GM10248 (cell line): ENCODE measurements at regions of chr11 and their contacts with region 1.

Region 1: DNA sequence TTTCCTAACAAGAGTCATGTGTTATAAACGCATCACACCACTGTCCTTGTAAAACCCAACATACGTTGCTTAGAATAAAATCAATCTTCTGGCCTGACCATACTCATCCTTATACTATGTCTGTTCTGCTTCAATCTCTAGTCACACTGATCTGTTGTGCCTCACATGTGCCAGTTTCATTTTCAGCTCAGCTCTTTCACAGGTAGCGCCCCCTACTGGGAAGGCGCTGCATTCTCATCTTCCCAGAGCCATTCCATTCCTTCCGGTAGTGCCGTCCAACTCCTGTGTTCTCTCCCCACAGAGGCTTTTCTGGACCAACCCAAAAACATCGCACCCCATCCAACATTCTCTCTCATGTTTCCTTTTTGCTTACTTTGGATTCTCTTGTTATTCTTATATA is 22.2 kb downstream of the CASP5 start:
- DNase-seq: peak; percentile 38
- CTCF ChIP-seq: peak; percentile 81

Region 2: DNA sequence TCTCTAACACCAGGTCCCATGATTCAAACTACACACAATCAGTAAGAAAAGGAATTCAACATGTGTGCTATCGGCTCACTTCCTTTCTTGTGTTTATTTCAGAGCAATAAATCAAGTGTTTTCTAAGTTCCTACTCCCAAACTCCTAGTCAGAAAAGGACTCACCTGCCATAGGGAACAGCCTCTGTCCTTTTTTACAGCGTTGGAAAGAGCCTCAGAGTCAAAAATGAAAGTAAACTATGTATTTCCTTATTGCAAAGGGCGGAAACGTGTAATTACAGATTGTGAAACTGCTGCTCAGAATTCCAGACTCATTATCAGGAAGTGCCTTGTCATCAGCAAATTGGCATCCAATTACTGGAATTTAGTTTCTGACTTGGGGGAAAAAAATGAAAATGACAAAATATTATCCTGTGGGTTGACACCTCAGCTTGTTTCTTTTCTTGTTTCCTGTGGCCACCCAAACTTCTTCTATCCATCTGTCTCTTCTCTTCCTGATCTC is 32.4 kb before region 1 on chr11 and contains the start of gene CASP4:
- CTCF ChIA-PET with region 1: interaction called, 12 read pairs
- POLR2A ChIA-PET with region 1: no interaction called
- DNase-seq: peak; percentile 10
- CTCF ChIP-seq: no peak